Activated CD4-positive, alpha-beta memory T cell treated with anti-CD3 and anti-CD28 coated beads, Interleukin-2, amount 10 ng/mL, durations not matched to agents 7 days and 5 days (primary cell): ENCODE measurements at regions of chr13 and their contacts with region 1.

Region 1: GRCh38 chr13:50911937-50912795 is 2.6 kb downstream of the RNASEH2B start:
- DNase-seq: peak; percentile 95
- H3K4me3 Mint-ChIP-seq: peak overlapping the region; percentile 88
- H3K27ac Mint-ChIP-seq: peak overlapping the region; percentile 89
- H3K4me1 Mint-ChIP-seq: peaks cover 61% of the 10 kb centered on the region
- H3K27me3 Mint-ChIP-seq: no peaks in the 10 kb centered on the region

Region 2: DNA sequence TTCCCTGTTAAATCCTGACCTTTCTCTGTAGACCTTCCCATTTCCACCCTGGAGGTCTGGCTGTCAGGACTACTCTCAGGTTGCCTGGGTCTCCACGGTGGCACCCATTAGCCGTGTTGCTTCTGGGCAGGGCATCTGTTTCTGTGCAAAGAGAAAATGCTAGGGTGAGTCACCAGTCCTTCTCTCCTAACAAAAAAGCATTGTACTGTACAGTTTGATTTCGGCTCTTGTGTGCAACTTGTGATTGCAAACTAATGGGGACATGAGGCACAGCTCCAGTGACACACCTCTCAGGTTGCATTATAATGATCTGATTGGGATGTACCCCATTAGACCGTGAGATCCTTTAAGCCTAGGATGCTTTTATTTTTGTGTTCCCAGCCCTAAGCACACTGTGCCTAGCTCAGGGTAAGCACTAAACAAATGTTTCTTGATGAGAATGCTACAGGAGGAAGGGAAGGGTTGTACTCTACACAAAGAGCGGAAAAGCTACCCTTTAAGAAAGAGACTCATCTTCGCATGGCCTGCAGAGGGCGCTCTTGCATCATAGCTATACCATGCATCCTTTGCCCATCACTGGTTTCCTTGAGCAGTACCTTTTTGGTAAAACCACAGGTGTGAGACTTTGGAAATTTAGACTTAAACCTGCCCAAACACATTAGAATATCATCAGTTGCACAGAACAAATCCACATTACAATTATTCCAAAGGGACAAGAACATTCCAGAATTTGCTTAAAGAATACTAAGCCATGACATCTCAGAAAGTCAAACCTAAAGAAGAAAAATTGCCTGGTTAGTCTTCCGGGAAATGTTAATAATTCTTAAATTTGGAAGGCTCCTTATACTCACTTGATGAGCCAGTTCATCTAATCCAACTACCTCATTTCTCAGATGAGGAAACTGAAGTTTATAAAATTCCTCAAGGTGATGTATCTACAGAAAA is 935.6 kb before region 1 on chr13:
- CTCF ChIA-PET with region 1: interaction called, 17 read pairs
- POLR2A ChIA-PET with region 1: interaction called, 7 read pairs
- DNase-seq: peak; percentile 78
- H3K4me3 Mint-ChIP-seq: no peak overlapping the region
- H3K27ac Mint-ChIP-seq: no peak overlapping the region
- H3K4me1 Mint-ChIP-seq: peaks cover 2% of the 10 kb centered on the region
- H3K27me3 Mint-ChIP-seq: no peaks in the 10 kb centered on the region

Region 3: GRCh38 chr13:50801087-50801931 is 110.9 kb before region 1 on chr13:
- CTCF ChIA-PET with region 1: interaction called, 20 read pairs
- POLR2A ChIA-PET with region 1: interaction called, 6 read pairs
- DNase-seq: peak; percentile 70
- H3K4me3 Mint-ChIP-seq: no peak overlapping the region
- H3K27ac Mint-ChIP-seq: no peak overlapping the region
- H3K4me1 Mint-ChIP-seq: peaks cover 6% of the 10 kb centered on the region
- H3K27me3 Mint-ChIP-seq: peaks cover 9% of the 10 kb centered on the region

Region 4: DNA sequence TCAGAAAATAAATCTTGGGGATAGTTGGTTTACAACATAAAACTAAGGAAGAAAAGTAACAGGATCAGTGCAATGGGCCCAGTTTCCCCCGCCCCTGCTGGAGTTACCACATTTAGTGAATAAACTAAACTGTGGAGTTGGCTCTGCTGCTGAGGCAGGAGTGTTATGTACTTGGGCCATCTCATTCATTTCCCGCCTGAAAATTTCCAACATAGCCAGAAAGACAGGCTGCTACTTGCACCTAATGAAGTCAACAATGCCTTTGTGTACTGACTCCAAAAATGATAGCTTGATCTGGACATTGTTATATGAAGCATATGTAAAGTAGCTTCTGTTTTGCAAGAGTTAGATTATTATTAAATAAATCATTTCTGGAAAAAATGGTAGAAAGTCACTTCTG is 10.5 kb before region 1 on chr13:
- CTCF ChIA-PET with region 1: interaction called, 131 read pairs
- POLR2A ChIA-PET with region 1: interaction called, 247 read pairs
- DNase-seq: no peak
- H3K4me3 Mint-ChIP-seq: no peak overlapping the region
- H3K27ac Mint-ChIP-seq: no peak overlapping the region
- H3K4me1 Mint-ChIP-seq: no peaks in the 10 kb centered on the region
- H3K27me3 Mint-ChIP-seq: peaks cover 2% of the 10 kb centered on the region

Region 5: GRCh38 chr13:51070005-51070649 is 158.0 kb after region 1 on chr13:
- CTCF ChIA-PET with region 1: interaction called, 36 read pairs
- POLR2A ChIA-PET with region 1: interaction called, 4 read pairs
- DNase-seq: peak; percentile 84
- H3K4me3 Mint-ChIP-seq: no peak overlapping the region
- H3K27ac Mint-ChIP-seq: peak overlapping the region; percentile 70
- H3K4me1 Mint-ChIP-seq: peaks cover 52% of the 10 kb centered on the region
- H3K27me3 Mint-ChIP-seq: peaks cover 16% of the 10 kb centered on the region